GM23248 (cell line): ENCODE measurements at regions of chr4 and their contacts with region 1.

Region 1: DNA sequence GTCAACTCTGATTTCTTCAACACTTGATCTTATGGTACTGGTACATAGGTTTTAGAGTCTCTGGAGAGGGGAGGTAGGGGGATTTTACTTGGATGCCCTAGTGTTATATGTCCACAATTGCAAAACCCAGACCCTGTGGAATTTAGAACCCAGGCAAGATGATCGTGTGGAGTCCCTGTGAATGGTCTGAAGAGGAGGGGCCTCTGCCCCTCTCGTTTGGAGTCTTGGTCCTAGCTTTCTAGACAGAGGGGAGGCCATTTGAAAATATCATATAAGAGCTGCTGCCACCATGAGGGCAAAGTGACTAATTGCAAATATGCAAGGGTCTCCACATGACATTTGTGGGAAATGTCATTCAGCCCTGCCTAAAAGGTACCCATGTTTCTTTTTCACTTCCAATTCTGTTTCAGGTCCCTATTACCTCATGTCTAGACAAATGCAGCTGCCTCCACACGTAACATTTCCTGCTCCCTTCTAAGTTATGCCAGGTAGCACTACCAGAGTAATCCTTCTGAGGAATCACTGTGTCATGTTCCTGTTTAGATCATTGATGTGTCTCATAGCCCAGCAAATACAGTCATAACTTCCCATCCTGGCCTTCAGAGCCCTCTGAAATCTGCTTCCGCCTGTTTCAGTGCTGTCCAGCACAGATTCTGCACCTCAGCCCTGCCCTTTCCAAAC is 126.8 kb downstream of the KLHL8 start:
- DNase-seq: peak; percentile 82
- H3K4me3 ChIP-seq: no peak overlapping the region
- H3K27ac ChIP-seq: peak overlapping the region; percentile 87
- H3K4me1 ChIP-seq: peaks cover 24% of the 10 kb centered on the region
- H3K27me3 ChIP-seq: no peaks in the 10 kb centered on the region

Region 2: GRCh38 chr4:86924811-86925210 is 168.8 kb before region 1 on chr4:
- in situ Hi-C with region 1: loop called (anchors 5 kb)
- DNase-seq: peak; percentile 78
- H3K4me3 ChIP-seq: 0 out of 2 replicates have a peak overlapping the region, but pooled peaks have one; percentile 3
- H3K27ac ChIP-seq: peak overlapping the region; percentile 55
- H3K4me1 ChIP-seq: peaks cover 59% of the 10 kb centered on the region
- H3K27me3 ChIP-seq: no peaks in the 10 kb centered on the region

Region 3: DNA sequence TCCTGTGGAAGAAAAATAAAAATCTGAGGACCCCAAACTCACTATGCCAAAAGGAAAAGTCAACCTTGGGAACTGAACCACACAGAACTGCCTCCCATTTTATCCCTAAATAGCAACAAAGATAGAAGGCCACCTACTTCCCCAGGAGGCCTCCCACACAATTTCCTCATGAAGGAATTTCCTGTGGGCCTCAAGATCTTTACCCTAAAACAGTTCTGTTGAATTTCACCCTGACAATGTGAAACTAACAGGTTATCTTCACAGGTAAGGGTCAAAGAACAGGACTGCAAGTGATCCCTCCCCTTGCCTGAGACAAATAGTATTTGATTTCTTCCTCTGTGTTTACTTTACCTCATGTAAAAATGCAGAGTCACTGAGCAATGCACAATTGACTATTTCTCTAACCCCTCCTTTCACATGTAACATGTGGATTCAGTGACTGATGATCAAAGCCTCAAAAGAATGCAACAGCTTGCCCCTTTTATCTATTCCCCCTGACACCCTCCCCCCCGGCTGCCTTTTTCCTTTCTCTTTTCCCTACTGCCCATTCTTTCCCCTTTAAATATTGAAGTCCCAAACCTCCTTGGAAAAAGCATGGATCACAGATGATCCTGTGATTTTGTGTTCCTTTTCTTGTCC is 772.5 kb after region 1 on chr4:
- in situ Hi-C with region 1: no loop called
- DNase-seq: peak; percentile 14
- H3K4me3 ChIP-seq: no peak overlapping the region
- H3K27ac ChIP-seq: no peak overlapping the region
- H3K4me1 ChIP-seq: peaks cover 8% of the 10 kb centered on the region; the same call in 1 of the 2 replicates
- H3K27me3 ChIP-seq: peaks cover 16% of the 10 kb centered on the region; the same call in 1 of the 2 replicates